Dendritic cell treated with granulocyte-macrophage colony-stimulating factor and Interleukin-4, amounts not matched to agents 40 ng/mL and 50 ng/mL, for 4 days (primary cell): ENCODE measurements at regions of chr1 and their contacts with region 1.

Region 1: GRCh38 chr1:68346188-68346808 is 103.5 kb downstream of the RPE65 start:
- H3K4me3 Mint-ChIP-seq: no peak overlapping the region
- H3K27ac Mint-ChIP-seq: no peak overlapping the region
- H3K4me1 Mint-ChIP-seq: peaks cover 29% of the 10 kb centered on the region
- H3K27me3 Mint-ChIP-seq: no peaks in the 10 kb centered on the region

Region 2: DNA sequence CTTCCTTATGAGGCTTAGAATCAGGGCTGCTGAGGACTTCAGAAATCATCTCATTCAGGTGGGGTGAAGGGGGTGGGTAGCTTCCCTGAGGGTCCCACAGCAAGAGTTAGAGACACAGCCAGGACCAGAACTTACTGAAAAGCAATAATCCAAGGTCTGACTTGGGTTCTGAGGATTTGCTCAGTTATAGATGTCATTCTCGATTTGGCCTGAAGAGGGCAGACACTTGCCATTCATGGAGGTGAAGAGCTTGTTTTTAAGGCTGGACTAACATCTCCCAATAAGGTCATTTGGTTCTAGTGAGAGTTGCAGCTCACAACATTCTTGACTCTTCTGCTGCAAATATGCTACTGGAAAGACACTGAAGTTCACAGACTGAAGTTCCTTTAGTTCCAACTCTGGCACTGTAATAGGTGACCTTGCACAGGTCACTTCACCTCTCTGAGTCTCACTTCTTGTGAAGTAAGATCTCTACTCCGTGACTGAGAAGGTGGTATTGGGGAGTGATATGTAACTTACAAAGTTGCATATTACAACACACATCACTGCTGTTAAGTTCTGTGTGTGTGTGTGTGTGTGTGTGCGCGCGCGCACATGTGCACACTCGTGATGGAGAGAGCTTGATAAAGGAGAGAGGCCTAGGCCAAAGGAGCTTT is 226.0 kb before region 1 on chr1:
- intact Hi-C with region 1: loop called (anchors 1 kb)
- H3K4me3 Mint-ChIP-seq: no peak overlapping the region
- H3K27ac Mint-ChIP-seq: no peak overlapping the region
- H3K4me1 Mint-ChIP-seq: peaks cover 7% of the 10 kb centered on the region
- H3K27me3 Mint-ChIP-seq: no peaks in the 10 kb centered on the region

Region 3: DNA sequence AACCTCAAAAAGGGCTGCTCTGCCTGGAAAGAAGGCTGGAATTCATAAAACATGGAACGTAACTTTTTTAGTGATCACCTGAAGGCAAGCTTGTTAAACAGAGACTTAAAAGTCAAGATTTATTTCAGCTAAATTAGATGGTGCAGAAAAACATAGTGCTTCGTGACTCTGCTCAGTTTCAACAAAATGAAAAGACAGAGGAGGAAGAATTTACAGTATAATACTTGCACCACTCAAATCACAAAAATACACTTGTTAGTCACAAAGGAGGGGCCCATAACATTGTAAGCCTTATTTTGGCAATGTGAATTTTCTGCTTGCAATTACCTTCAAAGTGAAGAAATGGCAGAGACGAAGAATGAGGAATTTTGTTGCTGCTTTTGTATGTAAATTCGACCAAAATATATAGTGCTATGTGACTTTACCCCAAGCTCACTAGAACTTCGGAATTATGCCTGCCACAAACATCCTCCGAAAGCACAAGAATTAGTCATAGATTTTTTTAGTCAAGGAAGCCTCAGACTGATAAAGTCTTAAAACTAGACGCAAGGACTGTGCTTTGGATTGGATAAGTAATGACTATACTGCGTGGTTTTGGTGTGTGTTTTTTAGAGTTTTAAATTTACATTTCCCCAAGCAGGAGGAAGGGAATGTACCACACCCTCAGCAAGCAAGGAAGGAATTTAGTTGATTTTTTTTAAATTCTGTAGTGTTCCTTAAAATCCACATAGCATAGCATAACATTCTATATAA is 124.5 kb before region 1 on chr1:
- intact Hi-C with region 1: loop called (anchors 10 kb)
- H3K4me3 Mint-ChIP-seq: no peak overlapping the region
- H3K27ac Mint-ChIP-seq: no peak overlapping the region
- H3K4me1 Mint-ChIP-seq: peaks cover 5% of the 10 kb centered on the region
- H3K27me3 Mint-ChIP-seq: no peaks in the 10 kb centered on the region